Right lobe of liver (tissue), 6 donors: ENCODE measurements at regions of chr13 and their contacts with region 1.

Region 1: DNA sequence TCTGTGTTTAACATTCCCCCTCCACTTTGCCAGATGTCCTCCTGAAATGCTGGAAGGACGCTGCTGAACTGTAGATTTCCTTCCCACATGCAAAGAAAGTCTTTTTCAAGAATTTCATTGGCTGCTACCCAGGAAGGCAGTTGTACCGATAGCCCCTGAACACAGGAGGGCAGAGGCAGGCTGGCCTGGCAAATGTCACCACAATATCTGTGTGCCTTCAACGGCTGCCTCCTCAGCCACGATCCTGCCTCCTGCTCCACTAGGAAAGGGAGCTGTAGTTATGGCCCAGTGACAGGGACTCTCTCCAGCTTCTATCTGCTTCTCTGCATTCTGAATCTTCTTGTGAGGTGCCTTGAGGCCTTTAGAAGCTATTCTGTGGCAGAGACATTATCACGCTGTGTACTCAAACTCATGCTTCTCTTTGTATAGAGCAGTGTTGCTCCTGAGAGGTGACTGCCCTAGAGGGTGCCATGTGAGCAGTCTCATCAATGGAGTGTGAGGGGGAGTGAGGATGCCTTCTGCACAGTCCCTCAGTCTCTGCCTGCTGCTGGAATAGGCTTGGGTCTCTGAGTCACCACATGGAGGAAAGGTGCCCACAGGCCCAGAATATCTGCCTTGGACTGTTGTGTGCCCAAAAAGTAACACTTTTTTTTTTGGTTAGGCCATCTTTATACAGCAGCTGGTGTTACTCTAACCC is 279.8 kb downstream of the DNAJC15 start:
- DNase-seq: peak; percentile 56 to 78 (median 73)
- ATAC-seq: peak; percentile 62 to 84 (median 78)
- H3K4me3 ChIP-seq: no peak overlapping the region
- H3K27ac ChIP-seq: no peak overlapping the region
- H3K4me1 ChIP-seq: peaks cover 0 to 9% (median 4%) of the 10 kb centered on the region in 4 donors
- H3K27me3 ChIP-seq: no peaks in the 10 kb centered on the region
- CTCF ChIP-seq: peak; percentile 49 to 76 (median 54)
- POLR2A ChIP-seq: no peak

Region 2: GRCh38 chr13:43094901-43095300 is 208.3 kb before region 1 on chr13:
- intact Hi-C with region 1: no loop called
- DNase-seq: no peak
- ATAC-seq: no peak
- H3K4me3 ChIP-seq: no peak overlapping the region
- H3K27ac ChIP-seq: no peak overlapping the region
- H3K4me1 ChIP-seq: no peaks in the 10 kb centered on the region
- H3K27me3 ChIP-seq: no peaks in the 10 kb centered on the region
- CTCF ChIP-seq: no peak
- POLR2A ChIP-seq: no peak

Region 3: GRCh38 chr13:43405457-43405856 is 102.3 kb after region 1 on chr13:
- intact Hi-C with region 1: no loop called
- DNase-seq: no peak
- ATAC-seq: no peak
- H3K4me3 ChIP-seq: no peak overlapping the region
- H3K27ac ChIP-seq: no peak overlapping the region
- H3K4me1 ChIP-seq: no peaks in the 10 kb centered on the region
- H3K27me3 ChIP-seq: no peaks in the 10 kb centered on the region
- CTCF ChIP-seq: no peak
- POLR2A ChIP-seq: no peak

Region 4: GRCh38 chr13:43804461-43805070 is 501.4 kb after region 1 on chr13:
- intact Hi-C with region 1: loop called in 1 of 2 experiments (anchors 10 kb)
- DNase-seq: no peak
- ATAC-seq: peak; percentile 60 to 81 (median 68)
- H3K4me3 ChIP-seq: no peak overlapping the region
- H3K27ac ChIP-seq: no peak overlapping the region
- H3K4me1 ChIP-seq: no peaks in the 10 kb centered on the region
- H3K27me3 ChIP-seq: no peaks in the 10 kb centered on the region
- CTCF ChIP-seq: peak; percentile 58 to 65 (median 60)
- POLR2A ChIP-seq: no peak